Ovary (tissue), 10 donors: ENCODE measurements at regions of chr6 and their contacts with region 1.

Region 1: DNA sequence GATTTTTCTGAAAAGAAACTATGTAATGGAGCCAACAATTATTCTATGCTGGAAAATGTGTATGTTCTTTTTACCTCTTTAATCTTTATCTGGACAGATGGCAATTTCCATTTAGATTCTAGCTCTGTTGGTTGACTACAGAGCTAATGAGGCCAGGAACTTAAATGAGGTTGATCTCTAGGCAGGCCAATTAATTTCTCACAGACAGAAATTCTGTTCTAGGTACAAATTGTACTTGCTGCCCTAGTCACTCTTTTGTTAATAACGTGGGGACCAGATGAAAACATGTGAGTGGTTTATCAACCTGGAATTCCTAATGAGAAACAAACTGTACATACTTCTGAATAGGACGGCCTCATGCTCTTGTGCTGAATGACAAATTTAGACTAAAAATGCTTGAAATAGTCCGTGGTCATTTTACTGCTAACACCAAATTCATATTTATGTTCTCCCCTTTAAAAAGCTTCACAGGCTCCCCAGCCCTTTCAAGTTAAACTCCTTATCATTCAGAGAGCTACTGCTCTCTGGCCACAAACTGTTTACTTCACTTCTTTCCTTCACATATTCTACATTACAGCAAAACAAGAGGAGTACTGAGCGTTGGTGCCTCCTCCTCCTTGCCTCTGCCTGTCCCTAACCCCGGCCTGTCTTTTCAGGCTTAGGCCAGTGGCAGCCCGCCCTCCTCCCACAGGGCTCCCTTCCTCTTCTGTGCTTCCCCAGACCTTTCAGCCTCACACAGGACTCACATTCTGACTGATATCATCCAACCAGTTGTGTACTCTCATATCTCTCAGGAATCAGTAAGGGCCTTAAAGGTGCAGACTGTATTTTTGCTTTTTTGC is 41.4 kb downstream of the DTNBP1 start:
- DNase-seq: peak in 1 of 5 donors; percentile 39
- H3K4me3 ChIP-seq: no peak overlapping the region
- H3K27ac ChIP-seq: no peak overlapping the region
- H3K4me1 ChIP-seq: peaks cover 4% of the 10 kb centered on the region
- H3K27me3 ChIP-seq: no peaks in the 10 kb centered on the region
- CTCF ChIP-seq: no peak
- EP300 ChIP-seq: no peak
- POLR2A ChIP-seq: no peak

Region 2: DNA sequence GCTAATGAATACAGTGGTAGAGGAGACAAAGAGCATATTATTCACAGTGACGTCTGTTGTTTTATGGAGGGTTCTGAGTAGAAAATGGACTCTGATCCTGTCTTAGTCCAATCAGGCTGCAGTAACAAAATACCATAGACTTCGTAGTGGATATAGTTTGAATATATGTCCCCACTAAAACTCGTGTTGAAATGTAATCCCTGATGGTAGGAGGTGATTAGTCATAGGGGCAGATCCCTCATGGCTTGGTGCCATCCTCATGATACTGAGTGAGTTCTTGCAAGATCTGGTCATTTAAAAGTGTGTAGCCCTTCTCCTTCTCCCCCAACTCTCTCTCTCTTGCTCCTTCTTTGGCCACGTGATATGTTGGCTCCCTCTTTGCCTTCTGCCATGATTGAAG is 1421.4 kb before region 1 on chr6:
- intact Hi-C with region 1: loop called in 1 of 4 experiments (anchors 10 kb)
- DNase-seq: no peak
- H3K4me3 ChIP-seq: no peak overlapping the region
- H3K27ac ChIP-seq: no peak overlapping the region
- H3K4me1 ChIP-seq: no peaks in the 10 kb centered on the region
- H3K27me3 ChIP-seq: no peaks in the 10 kb centered on the region
- CTCF ChIP-seq: no peak
- EP300 ChIP-seq: no peak
- POLR2A ChIP-seq: no peak

Region 3: DNA sequence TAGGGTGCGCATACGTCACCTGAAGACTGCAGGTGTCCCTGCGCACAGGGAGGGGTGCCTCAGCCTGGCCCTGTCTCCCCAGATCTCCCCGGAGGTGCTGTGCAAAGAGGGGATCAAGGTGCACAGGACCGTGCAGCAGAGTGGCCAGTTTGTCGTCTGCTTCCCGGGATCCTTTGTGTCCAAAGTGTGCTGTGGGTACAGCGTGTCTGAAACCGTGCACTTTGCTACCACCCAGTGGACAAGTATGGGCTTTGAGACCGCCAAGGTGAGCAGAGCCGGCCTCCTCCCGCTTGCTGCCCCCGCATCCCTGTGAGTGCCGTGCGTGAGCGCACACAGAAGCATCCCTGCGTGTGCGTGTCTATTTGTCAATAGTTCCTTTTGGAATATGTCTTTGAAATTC is 109.3 kb before region 1 on chr6:
- intact Hi-C with region 1: loop called in 1 of 4 experiments (anchors 10 kb)
- DNase-seq: no peak
- H3K4me3 ChIP-seq: no peak overlapping the region
- H3K27ac ChIP-seq: no peak overlapping the region
- H3K4me1 ChIP-seq: no peaks in the 10 kb centered on the region
- H3K27me3 ChIP-seq: no peaks in the 10 kb centered on the region
- CTCF ChIP-seq: no peak
- EP300 ChIP-seq: no peak
- POLR2A ChIP-seq: no peak